AG04449 (cell line): ENCODE measurements at regions of chr12 and their contacts with region 1.

Region 1: DNA sequence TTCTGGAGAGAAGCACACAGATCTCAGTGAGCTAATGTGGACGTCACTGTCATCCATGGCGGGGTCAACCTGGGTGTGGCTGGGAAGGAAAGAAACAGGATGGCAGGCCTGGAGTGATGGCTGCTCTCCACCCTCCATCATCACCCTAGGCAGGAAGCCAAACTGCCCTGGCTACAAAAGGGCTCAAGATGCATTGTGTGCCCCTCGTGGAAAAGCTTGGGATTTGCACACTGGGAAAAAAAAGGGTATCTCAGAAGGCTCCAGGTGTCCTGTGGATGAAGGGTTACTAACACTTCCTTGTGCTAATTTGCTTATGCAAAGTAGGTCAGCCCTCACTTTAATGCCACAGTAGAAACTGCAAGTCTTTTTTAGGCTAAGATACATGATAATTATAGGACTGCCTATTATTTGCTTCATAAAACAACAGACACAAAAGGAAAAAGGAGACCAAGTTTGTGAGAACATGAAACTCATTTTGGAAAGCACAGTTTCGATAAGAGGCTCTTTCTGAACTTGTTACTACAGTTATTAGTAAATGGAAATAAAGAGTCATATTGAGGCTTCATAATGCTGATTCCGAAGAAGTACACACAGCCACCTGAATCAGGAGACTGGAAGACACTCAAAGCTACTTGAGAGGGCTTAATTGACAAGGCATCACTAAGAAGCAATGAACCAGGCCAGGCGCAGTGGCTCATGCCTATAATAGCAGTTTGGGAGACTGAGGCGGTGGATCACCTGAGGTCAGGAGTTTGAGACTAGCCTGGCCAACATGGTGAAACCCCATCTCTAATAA is 18.9 kb downstream of the RFC5 start:
- DNase-seq: no peak
- H3K4me3 ChIP-seq: no peak overlapping the region
- CTCF ChIP-seq: peak; percentile 13

Region 2: DNA sequence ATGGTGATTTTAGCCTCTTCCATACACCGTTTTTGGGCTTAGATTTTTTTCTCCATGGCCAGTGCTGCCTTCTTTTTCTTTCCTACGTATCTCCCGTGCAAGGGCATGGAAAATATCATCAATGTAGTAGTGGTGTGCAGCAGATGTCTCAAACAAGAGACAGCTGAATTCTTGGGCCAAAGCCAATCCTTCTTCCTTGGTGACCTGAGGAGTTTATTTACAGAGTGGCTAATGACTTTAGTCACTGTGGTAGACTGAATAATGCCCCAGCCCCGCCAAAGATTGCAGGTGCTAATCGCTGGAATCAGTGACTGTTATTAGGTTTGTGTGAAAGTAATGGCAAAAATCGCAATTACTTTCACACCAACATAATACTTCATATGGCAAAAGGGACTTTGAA is 438.5 kb before region 1 on chr12:
- CTCF ChIA-PET with region 1: no interaction called
- POLR2A ChIA-PET with region 1: no interaction called
- DNase-seq: no peak
- H3K4me3 ChIP-seq: no peak overlapping the region
- CTCF ChIP-seq: no peak

Region 3: DNA sequence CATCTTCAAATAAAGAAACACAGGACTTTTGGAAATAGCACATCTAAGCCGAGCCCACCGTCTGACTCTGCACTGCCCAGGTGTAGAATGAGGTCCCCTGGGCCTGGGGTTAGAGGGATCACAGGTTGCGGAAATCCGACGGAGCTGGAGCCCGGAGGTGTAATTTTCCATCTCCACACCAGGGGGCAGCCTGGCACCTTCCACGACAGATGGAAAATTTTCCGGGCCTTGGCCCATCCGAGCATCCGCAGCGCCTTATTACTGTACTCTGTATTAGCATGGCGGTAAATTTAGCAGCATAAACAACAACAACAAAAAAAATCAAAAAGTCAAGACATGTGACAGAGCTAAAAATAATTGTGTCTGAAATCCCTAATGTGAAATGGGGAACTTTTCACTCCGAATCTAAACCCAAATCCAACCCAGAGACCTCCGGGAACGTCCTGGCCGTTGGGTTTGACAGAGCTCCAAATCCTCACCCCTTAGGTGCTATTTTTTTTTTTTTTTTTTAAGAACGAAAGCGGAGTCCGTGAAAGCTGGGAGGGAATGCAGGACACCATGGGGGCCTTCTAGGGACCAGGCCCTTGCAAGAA is 160.5 kb before region 1 on chr12:
- CTCF ChIA-PET with region 1: interaction called, 233 read pairs
- POLR2A ChIA-PET with region 1: no interaction called
- DNase-seq: no peak
- H3K4me3 ChIP-seq: no peak overlapping the region
- CTCF ChIP-seq: peak; percentile 83

Region 4: DNA sequence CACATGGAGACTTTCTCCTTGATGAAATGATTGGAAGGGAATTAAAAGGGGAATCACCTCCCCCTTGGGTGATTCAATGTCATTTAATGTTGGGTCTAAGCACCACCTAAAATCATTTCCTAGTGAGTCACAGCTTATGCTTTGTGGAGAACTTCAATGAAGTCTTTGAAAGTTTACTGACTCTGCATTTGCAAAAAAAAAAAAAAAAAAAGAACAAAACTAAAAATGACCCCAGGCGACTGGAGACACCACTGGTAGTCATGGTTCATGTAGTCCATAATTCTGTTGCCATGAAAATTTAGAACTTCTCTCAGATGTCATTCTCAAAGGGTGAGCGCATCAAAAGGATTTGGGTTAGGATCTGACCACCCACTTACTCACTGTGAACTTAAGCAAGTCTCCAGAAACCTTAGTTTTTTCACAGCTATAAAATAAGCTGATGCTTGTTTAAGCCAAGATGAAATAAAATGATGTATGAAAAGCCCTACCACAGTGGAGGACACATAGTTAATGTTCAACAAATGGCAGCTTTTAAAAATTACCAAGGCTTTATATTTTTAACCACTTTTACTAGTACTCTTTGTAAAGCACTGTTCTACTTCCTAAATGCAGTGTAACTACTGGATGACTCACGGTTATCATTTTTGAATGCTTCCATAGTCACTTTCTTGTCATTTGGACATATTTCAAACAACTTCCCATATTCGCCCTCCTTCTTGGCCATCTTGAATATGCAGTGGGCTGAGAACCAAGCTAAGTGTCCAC is 48.6 kb before region 1 on chr12:
- CTCF ChIA-PET with region 1: no interaction called
- POLR2A ChIA-PET with region 1: no interaction called
- DNase-seq: no peak
- H3K4me3 ChIP-seq: no peak overlapping the region
- CTCF ChIP-seq: no peak

Region 5: DNA sequence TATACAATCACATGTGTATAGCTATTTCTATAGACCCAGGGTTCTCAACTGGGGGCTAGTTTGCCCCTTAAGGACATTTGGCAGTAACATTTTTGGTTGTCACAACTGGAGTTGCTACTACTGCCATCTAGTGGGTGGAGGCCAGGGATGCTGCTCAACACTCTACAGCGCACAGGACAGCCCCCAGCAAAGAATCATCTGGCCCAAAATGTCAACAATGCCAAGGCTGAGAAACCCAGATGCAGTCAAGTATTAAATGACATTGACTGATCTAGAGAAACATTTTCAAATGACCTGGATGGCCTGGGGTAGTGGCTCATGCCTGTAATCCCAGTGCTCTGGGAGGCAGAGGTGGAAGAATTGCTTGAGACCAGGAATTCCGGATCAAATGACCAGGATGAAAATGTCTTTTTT is 19.7 kb after region 1 on chr12:
- CTCF ChIA-PET with region 1: interaction called, 12 read pairs
- POLR2A ChIA-PET with region 1: no interaction called
- DNase-seq: no peak
- H3K4me3 ChIP-seq: no peak overlapping the region
- CTCF ChIP-seq: peak; percentile 34